Ovary (tissue), 10 donors: ENCODE measurements at regions of chr20 and their contacts with region 1.

Region 1: GRCh38 chr20:1108437-1108920 is 9.9 kb upstream of the PSMF1 start:
- DNase-seq: peak in 3 of 5 donors; percentile 26 to 51 (median 29)
- H3K4me3 ChIP-seq: no peak overlapping the region
- H3K27ac ChIP-seq: no peak overlapping the region
- H3K4me1 ChIP-seq: no peaks in the 10 kb centered on the region
- H3K27me3 ChIP-seq: no peaks in the 10 kb centered on the region
- CTCF ChIP-seq: no peak
- EP300 ChIP-seq: no peak
- POLR2A ChIP-seq: no peak

Region 2: GRCh38 chr20:815914-816606 is 292.4 kb before region 1 on chr20:
- intact Hi-C with region 1: loop called in 1 of 4 experiments (anchors 5 kb)
- DNase-seq: peak; percentile 29 to 70 (median 59)
- H3K4me3 ChIP-seq: no peak overlapping the region
- H3K27ac ChIP-seq: no peak overlapping the region
- H3K4me1 ChIP-seq: no peaks in the 10 kb centered on the region
- H3K27me3 ChIP-seq: no peaks in the 10 kb centered on the region
- CTCF ChIP-seq: peak; percentile 77 to 91 (median 85)
- EP300 ChIP-seq: no peak
- POLR2A ChIP-seq: no peak

Region 3: DNA sequence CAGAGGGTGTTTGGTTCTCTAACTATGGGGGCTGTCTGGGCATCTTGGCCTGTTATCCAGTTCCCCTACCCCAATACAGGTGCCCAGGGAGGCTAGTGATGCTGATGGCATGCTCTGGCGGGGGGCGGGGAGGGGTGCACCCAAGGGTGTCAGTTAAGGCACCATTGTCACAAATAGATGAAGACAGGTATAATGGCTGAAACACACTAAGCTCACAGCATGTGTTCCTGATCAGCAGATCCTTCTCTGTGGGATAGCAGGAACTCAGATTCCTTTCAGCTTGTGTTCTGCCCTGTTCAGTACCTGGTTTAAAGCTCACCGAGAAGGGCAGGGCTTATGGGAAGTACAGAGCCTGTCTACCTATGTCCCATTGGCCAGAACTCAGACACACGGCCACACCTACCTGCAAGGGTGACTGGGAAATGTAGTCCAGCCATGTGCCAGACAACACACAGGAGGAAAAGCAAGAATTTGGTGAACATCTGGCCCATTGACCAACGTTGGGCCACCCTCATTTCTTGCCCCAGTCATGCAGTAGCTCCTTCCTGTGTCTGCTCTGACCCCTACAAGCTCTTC is 102.9 kb before region 1 on chr20:
- intact Hi-C with region 1: no loop called
- DNase-seq: no peak
- H3K4me3 ChIP-seq: no peak overlapping the region
- H3K27ac ChIP-seq: no peak overlapping the region
- H3K4me1 ChIP-seq: no peaks in the 10 kb centered on the region
- H3K27me3 ChIP-seq: no peaks in the 10 kb centered on the region
- CTCF ChIP-seq: no peak
- EP300 ChIP-seq: no peak
- POLR2A ChIP-seq: no peak

Region 4: DNA sequence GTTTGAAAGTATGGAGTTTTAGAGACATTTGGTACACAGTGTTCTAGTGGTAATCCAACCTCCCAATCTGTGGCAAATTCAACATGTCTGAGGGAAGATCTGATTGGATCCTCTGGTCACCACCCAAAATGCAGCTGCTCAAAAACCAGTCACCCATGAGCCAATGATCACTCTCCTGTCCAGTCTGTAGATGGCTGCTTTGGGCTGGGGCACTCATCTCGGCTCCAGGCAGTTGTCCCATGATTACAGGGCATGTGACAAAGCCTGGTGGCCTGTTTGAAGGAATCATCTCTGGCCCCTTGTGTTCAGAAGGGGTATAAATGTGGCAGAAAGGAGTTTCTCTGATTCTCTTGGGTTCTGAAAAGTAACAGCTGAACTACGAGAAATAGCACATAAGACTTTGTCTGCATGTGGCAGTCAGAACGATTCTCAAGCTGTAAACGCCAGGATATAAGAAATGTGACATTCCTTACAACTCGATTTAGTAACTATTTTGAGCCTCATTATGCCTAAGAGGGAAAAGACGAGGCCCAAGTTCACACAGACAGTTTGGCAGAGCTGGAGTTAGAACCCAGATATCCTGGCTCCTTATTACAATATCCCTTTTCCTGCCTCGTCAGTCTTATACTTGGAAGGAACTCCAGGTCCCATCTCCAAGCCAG is 90.9 kb after region 1 on chr20:
- intact Hi-C with region 1: no loop called
- DNase-seq: no peak
- H3K4me3 ChIP-seq: no peak overlapping the region
- H3K27ac ChIP-seq: no peak overlapping the region
- H3K4me1 ChIP-seq: no peaks in the 10 kb centered on the region
- H3K27me3 ChIP-seq: no peaks in the 10 kb centered on the region
- CTCF ChIP-seq: no peak
- EP300 ChIP-seq: no peak
- POLR2A ChIP-seq: no peak

Region 5: GRCh38 chr20:1423625-1424106 is 315.2 kb after region 1 on chr20:
- intact Hi-C with region 1: no loop called
- DNase-seq: no peak
- H3K4me3 ChIP-seq: no peak overlapping the region
- H3K27ac ChIP-seq: no peak overlapping the region
- H3K4me1 ChIP-seq: no peaks in the 10 kb centered on the region
- H3K27me3 ChIP-seq: no peaks in the 10 kb centered on the region
- CTCF ChIP-seq: no peak
- EP300 ChIP-seq: no peak
- POLR2A ChIP-seq: no peak